PC-9 (cell line): ENCODE measurements at regions of chr1 and their contacts with region 1.

Region 1: DNA sequence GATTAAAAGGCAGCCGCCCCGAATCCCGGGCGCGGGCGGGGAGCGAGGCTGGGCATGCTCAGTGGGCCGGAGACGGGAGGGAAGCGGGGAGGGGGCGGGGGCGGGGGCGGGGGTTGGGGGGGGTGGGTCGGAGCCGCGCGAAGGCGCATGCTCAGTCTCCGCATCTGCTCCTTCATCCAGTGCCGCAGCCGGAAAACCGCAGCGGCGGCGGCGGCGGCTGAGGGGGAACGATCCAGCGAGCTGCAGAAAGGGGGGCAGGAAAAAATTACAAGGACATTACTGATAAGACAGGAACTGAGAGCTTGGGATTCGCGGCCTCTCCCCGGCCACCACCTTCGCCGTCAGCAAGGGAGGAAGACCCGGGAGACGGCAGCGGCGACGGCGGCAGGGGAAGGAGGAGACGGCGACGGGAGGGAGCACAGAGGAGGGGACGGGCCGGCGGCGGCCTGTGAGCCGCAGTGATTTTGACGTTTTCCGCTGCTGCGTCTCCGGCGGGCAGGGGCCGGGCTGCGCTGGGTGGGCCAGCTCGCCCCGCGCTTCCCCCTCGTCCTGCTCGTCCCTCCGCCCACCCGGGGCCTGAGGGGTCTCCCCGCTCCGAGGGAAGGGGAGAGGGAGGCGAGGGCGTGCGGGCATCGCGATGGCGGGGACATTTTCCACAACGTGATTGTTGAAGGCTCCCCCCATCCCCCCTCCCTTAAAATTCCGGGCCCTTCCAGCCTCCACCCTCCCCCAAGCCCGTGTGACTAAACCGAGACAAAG is at the start of gene CAMSAP2:
- DNase-seq: peak; percentile 70 to 88
- H3K4me3 ChIP-seq: peak within 1 kb of the TSS; percentile 99
- H3K27ac ChIP-seq: peak within 1 kb of the TSS; percentile 91
- H3K4me1 ChIP-seq: peaks cover 40% of the 10 kb centered on the region
- H3K27me3 ChIP-seq: no peaks in the 10 kb centered on the region
- CTCF ChIP-seq: no peak
- total RNA-seq, gene CAMSAP2: 27.5 and 40.3 TPM in 2 replicates

Region 2: GRCh38 chr1:200639790-200640669 is 98.9 kb before region 1 on chr1:
- CTCF ChIA-PET with region 1: no interaction called
- POLR2A ChIA-PET with region 1: no interaction called
- intact Hi-C with region 1: loop called (anchors 1 kb)
- DNase-seq: peak; percentile 71 to 88
- H3K4me3 ChIP-seq: peak overlapping the region; percentile 10; the same call in 1 of the 2 replicates
- H3K27ac ChIP-seq: peak overlapping the region; percentile 86
- H3K4me1 ChIP-seq: peaks cover 45% of the 10 kb centered on the region
- H3K27me3 ChIP-seq: no peaks in the 10 kb centered on the region
- CTCF ChIP-seq: no peak

Region 3: GRCh38 chr1:200802865-200803512 is 64.1 kb after region 1 on chr1:
- CTCF ChIA-PET with region 1: no interaction called
- POLR2A ChIA-PET with region 1: no interaction called
- intact Hi-C with region 1: loop called (anchors 2 kb)
- DNase-seq: peak; percentile 57 to 74
- H3K4me3 ChIP-seq: no peak overlapping the region
- H3K27ac ChIP-seq: no peak overlapping the region
- H3K4me1 ChIP-seq: no peaks in the 10 kb centered on the region
- H3K27me3 ChIP-seq: no peaks in the 10 kb centered on the region
- CTCF ChIP-seq: peak; percentile 93

Region 4: GRCh38 chr1:201137579-201138310 is 398.8 kb after region 1 on chr1:
- CTCF ChIA-PET with region 1: no interaction called
- POLR2A ChIA-PET with region 1: no interaction called
- intact Hi-C with region 1: no loop called
- DNase-seq: peak in 1 of 2 experiments; percentile 37
- H3K4me3 ChIP-seq: no peak overlapping the region
- H3K27ac ChIP-seq: no peak overlapping the region
- H3K4me1 ChIP-seq: no peaks in the 10 kb centered on the region
- H3K27me3 ChIP-seq: no peaks in the 10 kb centered on the region
- CTCF ChIP-seq: no peak